HAP-1 (cell line): ENCODE measurements at regions of chr12 and their contacts with region 1.

Region 1: GRCh38 chr12:12334367-12335040 is 15.5 kb downstream of the MANSC1 start:
- DNase-seq: peak; percentile 68 to 84
- H3K4me3 ChIP-seq: no peak overlapping the region
- H3K4me1 ChIP-seq: peaks cover 6% of the 10 kb centered on the region; the same call in 1 of the 2 replicates
- H3K27me3 ChIP-seq: no peaks in the 10 kb centered on the region

Region 2: GRCh38 chr12:11581179-11581755 is 753.2 kb before region 1 on chr12:
- in situ Hi-C with region 1: loop called (anchors 25 kb)
- DNase-seq: peak; percentile 63 to 81
- H3K4me3 ChIP-seq: no peak overlapping the region
- H3K4me1 ChIP-seq: no peaks in the 10 kb centered on the region
- H3K27me3 ChIP-seq: no peaks in the 10 kb centered on the region; the same call in none of the 2 replicates

Region 3: DNA sequence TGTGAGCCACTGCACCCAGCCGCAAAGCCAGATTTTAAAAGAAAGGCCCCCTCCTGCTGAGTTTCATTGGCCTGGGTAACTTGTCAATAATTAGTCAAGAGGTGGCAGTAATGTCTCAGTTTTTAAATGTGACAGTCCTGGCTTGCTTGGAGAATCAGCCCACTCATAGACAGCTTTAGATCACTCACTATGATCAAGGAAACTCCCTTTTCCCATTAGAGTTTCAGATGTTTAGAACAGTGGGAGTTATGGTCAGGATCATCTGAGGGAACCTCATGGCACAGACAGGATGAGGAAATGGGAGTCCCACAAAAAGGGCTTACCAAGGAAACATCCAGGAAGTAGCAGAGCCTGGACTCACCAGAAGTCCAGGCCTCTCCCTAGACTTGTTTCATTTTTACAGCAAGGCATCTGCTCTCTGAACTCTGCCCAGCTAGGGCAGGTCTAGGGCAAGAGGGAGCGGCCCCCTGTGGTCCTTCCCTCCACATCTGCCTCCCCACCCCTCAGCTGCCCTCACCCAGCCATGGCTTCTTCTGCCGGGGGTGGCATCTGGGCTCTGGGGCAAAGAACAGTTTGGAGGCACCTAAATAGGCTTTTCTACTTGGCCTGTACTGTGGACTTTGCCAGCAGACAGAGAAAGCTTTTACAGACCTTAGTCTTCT is 252.5 kb before region 1 on chr12:
- in situ Hi-C with region 1: loop called (anchors 10 kb)
- DNase-seq: peak; percentile 27 to 36
- H3K4me3 ChIP-seq: no peak overlapping the region
- H3K4me1 ChIP-seq: peaks cover 11% of the 10 kb centered on the region
- H3K27me3 ChIP-seq: no peaks in the 10 kb centered on the region

Region 4: DNA sequence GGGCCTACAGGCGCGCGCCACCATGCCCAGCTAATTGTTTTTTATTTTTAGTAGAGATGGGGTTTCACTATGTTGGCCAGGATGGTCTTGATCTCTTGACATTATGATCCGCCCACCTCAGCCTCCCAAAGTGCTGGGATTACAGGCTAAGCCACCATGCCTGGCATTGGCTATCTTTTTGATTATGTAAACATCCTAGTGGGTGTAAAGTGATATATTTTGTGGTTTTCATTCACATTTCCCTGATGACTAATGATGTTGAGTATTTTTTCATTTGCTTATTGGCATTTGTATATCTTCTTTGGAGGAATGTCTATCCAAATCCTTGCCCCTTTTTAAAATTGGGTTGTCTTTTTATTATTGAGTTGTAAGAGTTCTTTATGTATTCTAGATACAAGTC is 293.5 kb after region 1 on chr12:
- in situ Hi-C with region 1: no loop called
- DNase-seq: no peak
- H3K4me3 ChIP-seq: no peak overlapping the region
- H3K4me1 ChIP-seq: peaks cover 37% of the 10 kb centered on the region
- H3K27me3 ChIP-seq: no peaks in the 10 kb centered on the region

Region 5: DNA sequence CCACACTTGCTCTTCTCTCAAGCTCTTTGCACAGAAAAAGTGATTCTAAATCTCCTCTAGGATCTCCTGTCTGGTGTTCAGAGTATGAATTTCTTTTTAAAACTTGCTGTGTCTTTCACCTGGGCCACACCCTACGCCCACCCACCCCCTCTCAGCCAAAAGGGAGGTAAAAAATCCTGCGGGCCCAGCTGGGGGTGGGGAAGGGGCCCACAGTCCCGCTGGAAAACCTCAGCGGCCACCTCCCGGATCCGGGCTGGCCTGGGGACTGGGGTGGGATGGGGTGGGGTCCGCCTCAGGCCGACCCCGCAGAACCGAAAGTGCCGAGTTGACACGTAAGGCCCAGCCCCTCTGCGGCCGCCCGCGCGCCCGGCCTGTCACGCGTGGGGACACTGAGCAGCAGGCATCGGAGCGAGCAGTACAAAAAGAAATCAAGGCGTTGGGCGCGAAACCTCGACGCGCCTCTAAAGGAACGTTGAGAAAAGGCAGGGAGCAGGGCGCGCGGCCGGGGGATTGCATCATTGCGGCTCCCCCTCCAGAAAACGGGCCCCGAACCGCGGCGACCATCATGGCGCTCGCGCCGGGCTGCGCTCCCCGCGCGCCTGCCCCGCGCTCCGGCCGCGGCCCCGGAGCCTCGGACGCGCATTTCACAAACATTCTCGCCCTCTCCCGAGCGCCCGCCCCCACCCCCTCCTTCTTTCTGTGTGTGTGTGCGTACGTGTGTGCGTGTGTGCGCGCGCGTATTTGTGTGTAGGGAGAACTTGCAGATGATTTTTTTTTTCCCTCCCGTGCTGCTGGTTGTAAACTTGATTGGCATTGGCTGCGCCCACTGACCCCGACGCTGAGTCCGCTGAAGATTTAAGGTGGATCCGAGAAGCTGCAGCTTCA is 390.4 kb after region 1 on chr12:
- in situ Hi-C with region 1: no loop called
- DNase-seq: peak; percentile 95 to 97
- H3K4me3 ChIP-seq: peak overlapping the region; percentile 72
- H3K4me1 ChIP-seq: peaks cover 24% of the 10 kb centered on the region
- H3K27me3 ChIP-seq: no peaks in the 10 kb centered on the region